ENCODE measurements at regions of chr12 and their contacts with region 1.

Region 1: DNA sequence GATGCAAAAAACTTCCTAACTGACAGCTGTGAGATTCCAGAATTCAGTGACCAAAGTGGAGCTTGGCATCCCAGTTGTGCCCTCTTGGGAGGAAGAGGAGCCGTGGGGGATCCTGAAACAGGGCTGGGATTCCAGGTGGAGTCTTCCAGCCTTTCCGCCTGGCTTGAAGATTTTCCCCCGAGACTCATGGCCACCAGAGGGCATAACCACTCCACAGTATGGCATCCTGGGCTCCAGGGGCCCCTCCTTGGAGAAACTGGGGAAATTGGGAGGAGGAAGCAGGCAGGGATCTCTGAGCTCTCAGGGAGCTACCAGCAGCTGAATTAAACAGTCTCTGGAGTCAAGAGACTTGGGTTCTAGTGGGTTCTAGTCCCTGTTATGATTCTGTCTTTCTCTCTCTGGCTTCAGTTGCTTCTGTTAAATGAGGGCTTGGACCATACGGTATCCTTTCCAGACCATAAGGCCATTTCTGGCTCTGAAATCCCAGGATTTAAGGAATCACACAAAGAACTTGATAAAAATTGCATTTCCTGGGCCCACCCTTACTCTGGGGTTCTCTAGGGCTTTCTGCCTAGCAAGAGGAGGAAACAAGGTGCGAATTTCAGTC is 2.6 kb upstream of the TAMALIN start:
- DNase-seq: peak; percentile 60
- H3K4me3 ChIP-seq: no peak overlapping the region
- H3K27ac ChIP-seq: no peak overlapping the region
- H3K4me1 ChIP-seq: peaks cover 22% of the 10 kb centered on the region
- H3K27me3 ChIP-seq: no peaks in the 10 kb centered on the region
- CTCF ChIP-seq: peak; percentile 72 to 79
- POLR2A ChIP-seq: no peak

Region 2: GRCh38 chr12:51284476-51284875 is 719.7 kb before region 1 on chr12:
- CTCF ChIA-PET with region 1: no interaction called
- POLR2A ChIA-PET with region 1: no interaction called
- dilution Hi-C with region 1: no loop called
- intact Hi-C with region 1: no loop called
- DNase-seq: no peak
- H3K4me3 ChIP-seq: no peak overlapping the region
- H3K27ac ChIP-seq: no peak overlapping the region
- H3K4me1 ChIP-seq: no peaks in the 10 kb centered on the region
- H3K27me3 ChIP-seq: peaks cover 3 to 6% of the 10 kb centered on the region in 2 experiments
- CTCF ChIP-seq: no peak
- POLR2A ChIP-seq: no peak

Region 3: GRCh38 chr12:52063981-52064649 is 60.0 kb after region 1 on chr12:
- CTCF ChIA-PET with region 1: interaction called, 15 read pairs
- POLR2A ChIA-PET with region 1: interaction called, 10 read pairs
- dilution Hi-C with region 1: no loop called
- intact Hi-C with region 1: no loop called
- DNase-seq: peak; percentile 73
- H3K4me3 ChIP-seq: no peak overlapping the region
- H3K27ac ChIP-seq: peak overlapping the region; percentile 83
- H3K4me1 ChIP-seq: peaks cover 9% of the 10 kb centered on the region
- H3K27me3 ChIP-seq: no peaks in the 10 kb centered on the region
- CTCF ChIP-seq: no peak
- POLR2A ChIP-seq: no peak

Region 4: DNA sequence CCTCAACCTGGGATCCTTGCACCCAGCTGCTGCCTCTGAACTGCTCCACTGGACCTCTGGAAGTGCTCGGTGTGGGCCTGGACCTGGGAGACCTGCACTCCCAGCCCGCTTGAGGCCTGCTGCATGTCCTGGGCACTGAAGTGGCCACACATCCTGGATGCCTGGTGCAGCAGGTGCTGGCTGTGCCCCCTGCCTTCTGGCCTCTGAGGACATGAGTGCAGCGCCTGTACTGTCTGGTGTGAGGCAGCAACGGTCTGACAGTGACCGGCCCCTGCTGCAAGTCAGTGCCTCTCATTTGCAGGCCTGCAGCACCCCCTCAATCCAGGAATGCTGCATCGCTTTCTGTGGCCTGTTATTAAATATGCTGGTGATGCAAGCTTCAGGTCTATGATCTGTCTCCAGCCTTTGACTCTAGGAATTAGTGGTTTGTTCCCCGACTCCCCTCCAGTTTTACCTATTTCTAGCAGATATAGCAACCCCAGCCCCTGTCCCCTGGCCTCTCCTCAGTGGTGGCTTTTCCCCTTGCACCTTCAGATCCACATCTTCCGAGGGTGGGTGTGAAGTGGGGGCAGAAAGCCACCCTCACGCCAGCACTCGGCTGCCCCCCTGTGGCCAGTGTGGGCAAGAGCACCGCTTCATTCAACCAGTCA is 79.0 kb after region 1 on chr12:
- CTCF ChIA-PET with region 1: interaction called, 14 read pairs
- POLR2A ChIA-PET with region 1: interaction called, 7 read pairs
- dilution Hi-C with region 1: no loop called
- intact Hi-C with region 1: no loop called
- DNase-seq: peak; percentile 64
- H3K4me3 ChIP-seq: no peak overlapping the region
- H3K27ac ChIP-seq: no peak overlapping the region
- H3K4me1 ChIP-seq: peaks cover 5% of the 10 kb centered on the region
- H3K27me3 ChIP-seq: no peaks in the 10 kb centered on the region
- CTCF ChIP-seq: peak; percentile 96 to 98
- POLR2A ChIP-seq: no peak

Measured in endothelial cell of umbilical vein (primary cell).